Activated CD8-positive, alpha-beta T cell treated with anti-CD3 and anti-CD28 coated beads for 36 hours (primary cell): ENCODE measurements at regions of chr1 and their contacts with region 1.

Region 1: DNA sequence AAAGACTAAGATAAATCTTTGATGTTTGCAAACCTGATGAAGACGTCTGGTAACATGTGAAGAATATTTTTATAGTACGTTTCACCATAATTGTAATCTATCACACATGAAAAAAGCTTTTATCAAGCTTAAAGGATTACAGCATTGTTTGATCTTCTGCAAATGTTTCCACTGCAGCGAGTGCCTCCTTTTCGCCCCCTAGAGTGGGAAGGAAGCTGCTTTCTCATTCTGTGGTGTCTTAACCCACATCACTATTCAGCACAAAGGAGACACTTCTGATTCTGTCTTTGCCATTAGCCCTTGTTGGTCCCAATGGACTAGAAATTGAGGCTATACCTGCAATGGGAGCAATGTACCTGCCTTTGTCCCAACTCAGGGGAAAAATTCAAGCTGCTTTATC is 46.0 kb upstream of the IL12RB2 start:
- DNase-seq: peak; percentile 63
- ATAC-seq: peak; percentile 82
- H3K4me3 Mint-ChIP-seq: no peak overlapping the region
- H3K27ac Mint-ChIP-seq: no peak overlapping the region
- H3K4me1 Mint-ChIP-seq: peaks cover 28% of the 10 kb centered on the region
- H3K27me3 Mint-ChIP-seq: no peaks in the 10 kb centered on the region
- CTCF ChIP-seq: peak; percentile 39

Region 2: GRCh38 chr1:67250051-67250653 is 11.5 kb before region 1 on chr1:
- CTCF ChIA-PET with region 1: interaction called, 18 read pairs
- POLR2A ChIA-PET with region 1: interaction called, 5 read pairs
- intact Hi-C with region 1: no loop called
- DNase-seq: no peak
- ATAC-seq: no peak
- H3K4me3 Mint-ChIP-seq: no peak overlapping the region
- H3K27ac Mint-ChIP-seq: no peak overlapping the region
- H3K4me1 Mint-ChIP-seq: no peaks in the 10 kb centered on the region
- H3K27me3 Mint-ChIP-seq: peaks cover 7% of the 10 kb centered on the region
- CTCF ChIP-seq: no peak

Region 3: GRCh38 chr1:67479146-67479891 is 217.6 kb after region 1 on chr1:
- CTCF ChIA-PET with region 1: no interaction called
- POLR2A ChIA-PET with region 1: no interaction called
- intact Hi-C with region 1: no loop called
- DNase-seq: peak; percentile 13
- ATAC-seq: peak; percentile 65
- H3K4me3 Mint-ChIP-seq: no peak overlapping the region
- H3K27ac Mint-ChIP-seq: no peak overlapping the region
- H3K4me1 Mint-ChIP-seq: peaks cover 3% of the 10 kb centered on the region
- H3K27me3 Mint-ChIP-seq: peaks cover 2% of the 10 kb centered on the region
- CTCF ChIP-seq: no peak